ENCODE measurements at regions of chr15 and their contacts with region 1.

Region 1: GRCh38 chr15:63708126-63708772 is 111.1 kb downstream of the FBXL22 start:
- DNase-seq: no peak
- ATAC-seq: no peak
- H3K4me3 ChIP-seq: no peak overlapping the region
- H3K27ac ChIP-seq: no peak overlapping the region
- H3K4me1 ChIP-seq: peaks cover 7% of the 10 kb centered on the region
- H3K27me3 ChIP-seq: no peaks in the 10 kb centered on the region
- CTCF ChIP-seq: no peak
- EP300 ChIP-seq: no peak
- POLR2A ChIP-seq: no peak
- RAD21 ChIP-seq: no peak

Region 2: GRCh38 chr15:63553388-63553791 is 154.9 kb before region 1 on chr15:
- CTCF ChIA-PET with region 1: no interaction called
- POLR2A ChIA-PET with region 1: no interaction called
- RAD21 ChIA-PET with region 1: no interaction called
- SMC1A ChIA-PET with region 1: no interaction called
- in situ Hi-C with region 1: no loop called
- intact Hi-C with region 1: no loop called
- DNase-seq: no peak
- ATAC-seq: peak; percentile 47
- H3K4me3 ChIP-seq: no peak overlapping the region
- H3K27ac ChIP-seq: no peak overlapping the region
- H3K4me1 ChIP-seq: peaks cover 5% of the 10 kb centered on the region
- H3K27me3 ChIP-seq: no peaks in the 10 kb centered on the region
- CTCF ChIP-seq: no peak
- EP300 ChIP-seq: no peak
- POLR2A ChIP-seq: no peak
- RAD21 ChIP-seq: no peak

Region 3: GRCh38 chr15:63718590-63719035 is 10.4 kb after region 1 on chr15:
- CTCF ChIA-PET with region 1: interaction called, 3 read pairs
- POLR2A ChIA-PET with region 1: no interaction called
- RAD21 ChIA-PET with region 1: interaction called, 4 read pairs
- SMC1A ChIA-PET with region 1: interaction called, 10 read pairs
- in situ Hi-C with region 1: no loop called
- intact Hi-C with region 1: no loop called
- DNase-seq: no peak
- ATAC-seq: no peak
- H3K4me3 ChIP-seq: no peak overlapping the region
- H3K27ac ChIP-seq: no peak overlapping the region
- H3K4me1 ChIP-seq: peaks cover 3% of the 10 kb centered on the region; the same call in 1 of the 2 replicates
- H3K27me3 ChIP-seq: no peaks in the 10 kb centered on the region
- CTCF ChIP-seq: no peak
- EP300 ChIP-seq: no peak
- POLR2A ChIP-seq: no peak
- RAD21 ChIP-seq: no peak

Region 4: GRCh38 chr15:64247906-64248541 is 539.8 kb after region 1 on chr15:
- CTCF ChIA-PET with region 1: no interaction called
- POLR2A ChIA-PET with region 1: no interaction called
- RAD21 ChIA-PET with region 1: no interaction called
- SMC1A ChIA-PET with region 1: no interaction called
- in situ Hi-C with region 1: no loop called
- intact Hi-C with region 1: no loop called
- DNase-seq: peak; percentile 75
- ATAC-seq: peak; percentile 82
- H3K4me3 ChIP-seq: no peak overlapping the region
- H3K27ac ChIP-seq: no peak overlapping the region
- H3K4me1 ChIP-seq: peaks cover 23% of the 10 kb centered on the region
- H3K27me3 ChIP-seq: no peaks in the 10 kb centered on the region
- CTCF ChIP-seq: no peak
- EP300 ChIP-seq: peak; percentile 97 to 98
- POLR2A ChIP-seq: no peak
- RAD21 ChIP-seq: no peak